GM10248 (cell line): ENCODE measurements at regions of chr7 and their contacts with region 1.

Region 1: DNA sequence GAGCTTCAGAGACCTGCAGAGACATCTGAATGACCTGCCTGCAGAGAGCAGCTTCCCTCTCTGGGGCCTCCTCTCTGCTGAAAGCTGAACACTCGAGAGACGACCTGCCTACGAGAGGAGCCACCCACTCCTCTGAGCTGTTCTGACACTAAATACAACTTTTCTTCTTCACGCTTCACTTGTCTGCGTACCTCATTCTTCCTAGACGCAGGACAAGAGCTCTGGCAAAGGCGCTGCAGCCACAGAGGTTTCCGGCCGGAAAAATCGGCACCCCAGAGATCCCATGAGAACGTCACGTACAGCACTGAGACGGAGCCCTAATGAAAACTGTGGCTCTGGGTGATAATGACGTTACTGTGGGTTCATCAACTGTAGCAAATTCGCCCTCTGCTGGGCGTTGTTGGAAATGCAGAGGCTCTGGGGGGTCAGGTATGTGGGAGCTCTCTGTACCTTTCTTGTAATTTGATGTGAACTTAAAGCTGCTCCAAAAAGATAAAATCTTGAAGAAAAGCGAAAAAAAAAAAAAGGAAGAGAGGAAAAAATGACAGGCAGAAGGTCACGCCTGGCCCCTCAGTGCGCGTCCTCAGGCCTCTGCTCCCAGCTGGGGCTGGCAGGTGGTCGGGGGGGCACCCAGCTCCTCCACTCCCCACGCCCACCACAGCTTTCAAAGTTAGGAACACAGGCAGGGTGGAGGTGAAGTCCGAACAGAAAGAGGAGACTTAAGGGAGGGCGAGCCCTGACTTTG is 120.7 kb downstream of the DYNC2I1 start:
- DNase-seq: peak; percentile 86
- CTCF ChIP-seq: peak; percentile 90

Region 2: DNA sequence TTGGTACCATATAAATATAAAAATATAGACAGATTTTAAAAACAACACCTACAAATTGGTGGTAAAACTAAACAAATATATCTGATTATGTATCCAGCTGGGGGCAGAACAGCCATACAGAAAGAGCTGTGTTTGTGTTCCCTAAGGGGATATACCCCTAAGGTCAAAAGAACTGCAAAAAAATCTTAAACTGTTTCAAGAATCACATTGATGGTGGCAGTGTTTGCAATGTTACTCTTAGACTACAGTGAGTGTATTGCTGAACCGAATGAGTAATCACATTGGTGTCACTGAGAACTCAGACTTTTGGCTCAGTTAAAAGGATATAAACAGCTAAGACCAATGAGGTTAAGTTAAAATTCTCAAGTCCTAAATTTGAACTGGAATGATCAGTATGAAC is 362.3 kb before region 1 on chr7:
- CTCF ChIA-PET with region 1: interaction called, 10 read pairs
- POLR2A ChIA-PET with region 1: no interaction called
- DNase-seq: no peak
- CTCF ChIP-seq: no peak

Region 3: DNA sequence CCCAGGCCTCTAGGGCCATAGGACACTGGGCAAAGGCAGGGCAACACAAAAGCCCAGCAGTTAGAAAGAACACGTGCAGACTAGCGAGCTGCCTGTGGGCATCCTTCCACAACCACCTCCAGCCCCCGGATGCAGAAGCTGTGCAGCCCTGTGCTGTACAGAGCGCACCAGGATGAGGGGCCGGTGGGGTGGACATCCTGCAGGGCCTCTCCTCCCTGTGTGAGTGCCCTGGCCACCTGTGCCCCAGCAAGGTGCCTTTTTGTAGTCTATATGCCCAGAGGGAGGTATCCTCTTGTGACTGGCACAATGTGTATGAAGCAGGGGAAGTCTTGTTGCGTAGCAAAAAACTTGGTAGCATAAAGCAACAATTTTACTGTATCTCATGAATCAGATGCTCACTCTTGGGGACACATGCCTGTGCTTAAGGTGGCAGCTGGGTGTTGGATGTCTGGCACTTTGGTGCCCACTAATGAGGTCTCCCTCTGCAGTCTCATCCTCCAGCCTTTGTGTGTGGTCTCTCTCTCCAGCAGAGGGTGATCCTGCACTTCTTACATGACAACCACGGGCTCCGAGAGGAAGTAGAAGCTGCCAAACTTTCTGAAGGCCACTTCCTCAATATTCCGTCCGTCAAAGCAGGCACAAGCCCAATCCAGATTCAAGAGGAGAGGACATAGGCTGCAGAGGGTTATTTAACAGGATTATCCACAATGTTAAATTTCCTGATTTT is 281.1 kb before region 1 on chr7:
- CTCF ChIA-PET with region 1: interaction called, 124 read pairs
- POLR2A ChIA-PET with region 1: no interaction called
- DNase-seq: peak; percentile 57
- CTCF ChIP-seq: peak; percentile 70

Region 4: GRCh38 chr7:158863611-158864506 is 113.2 kb before region 1 on chr7:
- CTCF ChIA-PET with region 1: interaction called, 12 read pairs
- POLR2A ChIA-PET with region 1: no interaction called
- DNase-seq: peak; percentile 67
- CTCF ChIP-seq: no peak

Region 5: DNA sequence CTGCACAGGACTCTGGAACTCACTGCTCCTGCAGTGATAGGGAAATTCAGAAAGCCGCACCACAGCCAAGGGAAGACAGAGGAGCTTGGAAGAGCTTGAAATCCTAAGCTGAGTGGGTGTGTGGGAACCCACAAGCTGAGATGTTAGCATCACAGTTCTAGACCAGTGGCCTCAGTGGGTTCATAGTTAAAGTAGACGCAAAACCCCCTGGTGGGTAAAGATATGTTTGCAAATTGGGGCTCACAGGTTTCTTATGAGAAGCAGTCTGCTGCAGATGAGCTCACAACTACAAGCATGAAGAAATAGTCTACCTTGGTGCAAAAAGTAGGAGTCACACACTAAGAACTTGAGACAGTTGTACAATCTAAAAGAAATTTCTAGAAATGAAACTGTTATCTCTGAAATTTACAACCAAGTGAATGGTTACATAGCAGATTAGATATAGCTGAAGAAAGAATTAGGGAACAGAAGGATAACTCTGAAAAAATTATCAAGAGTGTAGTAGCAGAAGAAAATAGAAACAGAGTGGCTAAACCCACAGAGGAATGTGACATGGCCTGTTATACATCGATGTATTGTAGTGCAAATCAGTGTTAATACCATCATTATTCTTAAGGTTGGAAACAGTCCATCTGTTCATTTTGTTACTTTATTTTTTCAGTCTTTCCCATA is 43.4 kb before region 1 on chr7:
- CTCF ChIA-PET with region 1: interaction called, 11 read pairs
- POLR2A ChIA-PET with region 1: no interaction called
- DNase-seq: no peak
- CTCF ChIP-seq: no peak

Region 6: DNA sequence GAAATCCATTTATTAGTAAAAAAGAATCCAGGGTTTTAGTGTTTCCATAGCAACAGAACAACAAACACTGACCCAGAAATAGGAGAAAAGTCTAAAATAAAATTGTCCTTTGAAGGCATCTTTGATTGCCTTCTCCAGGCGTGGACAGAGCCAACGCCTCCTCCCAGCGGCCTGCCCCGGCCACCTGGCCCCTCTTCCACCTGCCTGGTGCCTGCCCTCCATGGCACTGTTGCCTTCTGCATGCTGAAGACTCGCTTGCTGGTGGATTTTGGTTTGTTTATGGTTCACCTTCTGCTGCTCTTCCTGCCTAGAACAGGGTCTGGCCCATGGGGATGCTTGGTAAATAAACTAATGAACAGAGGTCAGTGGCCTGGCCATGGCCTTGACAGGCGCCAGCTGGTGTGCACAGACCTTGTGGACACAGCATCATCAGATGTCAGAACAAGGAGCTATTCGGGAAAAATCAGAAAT is 13.2 kb before region 1 on chr7:
- CTCF ChIA-PET with region 1: interaction called, 35 read pairs
- POLR2A ChIA-PET with region 1: no interaction called
- DNase-seq: no peak
- CTCF ChIP-seq: no peak